BJ (cell line): ENCODE measurements at regions of chr1 and their contacts with region 1.

Region 1: GRCh38 chr1:245298781-245299180 is 144.0 kb downstream of the KIF26B start:
- DNase-seq: peak; percentile 41
- H3K4me3 ChIP-seq: no peak overlapping the region
- H3K27me3 ChIP-seq: no peaks in the 10 kb centered on the region
- CTCF ChIP-seq: no peak

Region 2: DNA sequence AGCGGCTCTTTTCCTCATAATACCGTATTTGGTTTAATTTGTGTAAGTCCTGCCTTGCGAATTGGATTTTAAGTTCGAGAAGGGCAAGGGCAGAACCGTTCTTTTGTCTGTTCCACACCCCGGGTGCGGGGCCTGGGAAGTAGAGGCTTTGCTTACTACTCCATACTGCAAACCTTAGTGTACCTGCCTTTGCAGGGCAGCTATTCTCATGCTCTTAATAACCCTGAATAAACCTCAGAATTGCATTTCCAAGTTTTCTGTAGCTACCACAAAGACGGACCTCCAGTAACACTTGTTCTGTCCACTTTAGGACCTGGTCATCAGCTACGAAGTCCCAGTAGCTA is 433.8 kb before region 1 on chr1:
- CTCF ChIA-PET with region 1: no interaction called
- POLR2A ChIA-PET with region 1: no interaction called
- DNase-seq: no peak
- H3K4me3 ChIP-seq: peak overlapping the region; percentile 63
- H3K27me3 ChIP-seq: no peaks in the 10 kb centered on the region
- CTCF ChIP-seq: no peak

Region 3: DNA sequence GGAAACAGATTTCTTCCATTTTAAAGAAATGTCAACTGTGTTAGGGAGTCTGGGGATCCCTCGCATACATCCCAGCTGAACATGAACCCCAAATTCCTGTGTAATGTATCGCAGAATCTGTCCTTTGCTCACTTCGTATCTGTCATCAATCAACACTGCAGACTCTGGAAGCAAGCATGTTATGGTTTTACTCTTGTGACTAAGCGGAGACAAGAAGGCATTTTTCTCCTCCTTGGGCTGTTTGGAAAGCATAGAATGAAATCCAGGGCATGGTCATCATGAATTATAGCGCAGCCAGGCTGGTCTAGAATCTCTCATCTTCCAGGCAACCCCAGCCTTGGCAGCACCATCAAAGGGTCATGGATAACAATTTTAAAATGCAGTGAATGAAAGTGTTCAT is 146.2 kb after region 1 on chr1:
- CTCF ChIA-PET with region 1: no interaction called
- POLR2A ChIA-PET with region 1: interaction called, 18 read pairs
- DNase-seq: no peak
- H3K4me3 ChIP-seq: no peak overlapping the region
- H3K27me3 ChIP-seq: no peaks in the 10 kb centered on the region
- CTCF ChIP-seq: no peak